ENCODE measurements at regions of chr14 and their contacts with region 1.

Region 1: DNA sequence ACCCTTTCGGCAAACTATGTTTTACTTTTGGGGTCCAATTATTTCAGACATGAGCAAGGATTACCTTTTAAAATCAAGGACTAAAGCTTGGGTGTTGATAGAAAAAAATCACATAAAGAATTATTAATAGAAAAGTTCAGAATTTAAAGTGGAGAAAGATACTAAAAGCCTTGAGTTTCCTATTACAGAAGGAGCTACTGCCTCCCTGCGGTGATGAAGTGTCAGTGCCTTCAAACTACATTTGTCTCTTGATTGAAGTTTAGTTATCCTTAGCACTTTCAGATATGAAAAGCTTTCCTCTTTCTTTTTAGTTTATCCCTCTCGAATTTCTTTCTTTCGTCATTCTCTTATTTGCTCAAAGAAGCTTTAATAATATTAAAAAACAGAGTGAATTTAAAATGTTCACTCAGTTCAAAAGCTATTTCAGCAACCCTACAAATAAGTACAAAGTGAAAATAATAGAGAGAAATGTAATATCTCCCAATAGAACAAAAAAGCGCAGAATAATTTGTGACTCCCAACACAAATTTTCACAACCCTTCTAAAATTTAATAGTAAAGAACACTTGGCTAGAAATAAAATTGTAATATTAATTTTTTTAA is 87.6 kb downstream of the SEC23A start:
- DNase-seq: no peak
- H3K4me3 ChIP-seq: no peak overlapping the region
- H3K27me3 ChIP-seq: no peaks in the 10 kb centered on the region
- CTCF ChIP-seq: peak; percentile 79

Region 2: GRCh38 chr14:38721822-38722431 is 293.5 kb before region 1 on chr14:
- CTCF ChIA-PET with region 1: interaction called, 15 read pairs
- POLR2A ChIA-PET with region 1: no interaction called
- DNase-seq: no peak
- H3K4me3 ChIP-seq: no peak overlapping the region
- H3K27me3 ChIP-seq: no peaks in the 10 kb centered on the region
- CTCF ChIP-seq: peak; percentile 73

Region 3: DNA sequence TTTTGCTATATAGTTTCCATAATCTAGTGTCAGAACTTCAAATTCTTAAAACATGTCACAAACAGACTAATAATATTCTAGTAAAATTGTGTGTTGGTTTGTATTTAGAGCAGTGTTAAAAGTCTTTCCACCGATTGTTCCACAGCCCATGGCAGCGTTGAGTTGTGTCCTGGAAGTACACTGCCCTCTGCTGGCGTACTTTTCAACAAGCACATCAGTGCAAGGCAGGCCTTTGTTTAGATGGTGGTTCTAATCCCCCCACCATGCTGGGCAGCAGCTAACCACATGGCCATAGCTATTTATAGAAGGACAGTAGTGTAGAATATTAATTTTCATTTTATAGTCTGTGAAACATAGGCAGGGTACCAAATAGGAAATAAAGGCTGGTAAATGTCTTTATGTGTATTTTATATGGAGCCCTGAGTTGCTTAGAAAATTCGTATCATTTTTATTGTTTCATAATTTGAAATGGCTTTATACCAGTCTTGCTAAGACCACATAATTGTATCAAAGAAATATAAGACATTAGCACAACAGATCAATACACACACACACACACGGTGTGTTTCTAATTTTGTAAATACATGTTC is 147.8 kb before region 1 on chr14:
- CTCF ChIA-PET with region 1: interaction called, 12 read pairs
- POLR2A ChIA-PET with region 1: no interaction called
- DNase-seq: peak; percentile 1
- H3K4me3 ChIP-seq: no peak overlapping the region
- H3K27me3 ChIP-seq: no peaks in the 10 kb centered on the region
- CTCF ChIP-seq: peak; percentile 83